Activated CD8-positive, alpha-beta T cell treated with anti-CD3 and anti-CD28 coated beads for 36 hours (primary cell): ENCODE measurements at regions of chr14 and their contacts with region 1.

Region 1: GRCh38 chr14:31926123-31926522 is 151.0 kb upstream of the ARHGAP5 start:
- DNase-seq: peak; percentile 30
- ATAC-seq: peak; percentile 39
- H3K4me3 Mint-ChIP-seq: no peak overlapping the region
- H3K27ac Mint-ChIP-seq: no peak overlapping the region
- H3K4me1 Mint-ChIP-seq: no peaks in the 10 kb centered on the region
- H3K27me3 Mint-ChIP-seq: no peaks in the 10 kb centered on the region
- CTCF ChIP-seq: peak; percentile 62

Region 2: GRCh38 chr14:31819304-31819703 is 106.8 kb before region 1 on chr14:
- CTCF ChIA-PET with region 1: no interaction called
- POLR2A ChIA-PET with region 1: no interaction called
- intact Hi-C with region 1: no loop called
- DNase-seq: no peak
- ATAC-seq: no peak
- H3K4me3 Mint-ChIP-seq: no peak overlapping the region
- H3K27ac Mint-ChIP-seq: no peak overlapping the region
- H3K4me1 Mint-ChIP-seq: no peaks in the 10 kb centered on the region
- H3K27me3 Mint-ChIP-seq: no peaks in the 10 kb centered on the region
- CTCF ChIP-seq: no peak

Region 3: GRCh38 chr14:32259368-32260013 is 333.4 kb after region 1 on chr14:
- CTCF ChIA-PET with region 1: interaction called, 70 read pairs
- POLR2A ChIA-PET with region 1: no interaction called
- intact Hi-C with region 1: loop called (anchors 5 kb)
- DNase-seq: peak; percentile 38
- ATAC-seq: peak; percentile 81
- H3K4me3 Mint-ChIP-seq: no peak overlapping the region
- H3K27ac Mint-ChIP-seq: peak overlapping the region; percentile 0
- H3K4me1 Mint-ChIP-seq: peaks cover 15% of the 10 kb centered on the region
- H3K27me3 Mint-ChIP-seq: no peaks in the 10 kb centered on the region
- CTCF ChIP-seq: no peak